Right cardiac atrium (tissue), 5 donors: ENCODE measurements at regions of chr12 and their contacts with region 1.

Region 1: GRCh38 chr12:116703214-116703795 is 34.6 kb downstream of the SPRING1 start:
- DNase-seq: peak; percentile 58 to 84 (median 83)
- ATAC-seq: peak; percentile 72 to 82
- H3K4me3 ChIP-seq: no peak overlapping the region
- H3K27ac ChIP-seq: no peak overlapping the region
- H3K4me1 ChIP-seq: no peaks in the 10 kb centered on the region
- H3K27me3 ChIP-seq: no peaks in the 10 kb centered on the region

Region 2: DNA sequence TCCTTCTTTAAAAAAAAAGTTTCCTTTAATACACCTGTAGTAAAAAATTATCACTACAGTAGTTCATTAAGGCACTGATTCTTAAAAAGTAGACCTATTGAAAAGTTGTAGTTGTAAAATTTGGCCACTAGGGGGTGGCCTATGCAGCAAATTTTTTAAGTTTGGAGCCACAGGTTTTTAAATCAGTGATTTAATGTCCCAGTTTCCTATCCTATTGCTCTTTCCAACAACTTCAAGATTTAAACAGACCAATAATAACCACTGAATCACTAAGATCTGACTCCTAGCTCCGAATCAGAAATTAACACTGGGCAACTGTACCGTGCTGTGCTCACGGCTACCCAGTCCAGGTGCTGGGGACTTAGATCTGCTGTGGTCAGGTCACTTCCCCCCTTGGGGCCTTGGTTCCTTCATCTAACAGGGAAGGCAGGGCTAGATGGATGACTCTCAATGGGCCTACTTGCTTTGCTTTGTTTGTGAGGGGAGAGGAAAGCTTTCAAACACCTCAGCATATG is 705.1 kb before region 1 on chr12:
- intact Hi-C with region 1: loop called in 2 of 4 experiments (anchors 10 kb)
- DNase-seq: no peak
- ATAC-seq: peak; percentile 26 to 58
- H3K4me3 ChIP-seq: no peak overlapping the region
- H3K27ac ChIP-seq: no peak overlapping the region
- H3K4me1 ChIP-seq: no peaks in the 10 kb centered on the region
- H3K27me3 ChIP-seq: no peaks in the 10 kb centered on the region

Region 3: DNA sequence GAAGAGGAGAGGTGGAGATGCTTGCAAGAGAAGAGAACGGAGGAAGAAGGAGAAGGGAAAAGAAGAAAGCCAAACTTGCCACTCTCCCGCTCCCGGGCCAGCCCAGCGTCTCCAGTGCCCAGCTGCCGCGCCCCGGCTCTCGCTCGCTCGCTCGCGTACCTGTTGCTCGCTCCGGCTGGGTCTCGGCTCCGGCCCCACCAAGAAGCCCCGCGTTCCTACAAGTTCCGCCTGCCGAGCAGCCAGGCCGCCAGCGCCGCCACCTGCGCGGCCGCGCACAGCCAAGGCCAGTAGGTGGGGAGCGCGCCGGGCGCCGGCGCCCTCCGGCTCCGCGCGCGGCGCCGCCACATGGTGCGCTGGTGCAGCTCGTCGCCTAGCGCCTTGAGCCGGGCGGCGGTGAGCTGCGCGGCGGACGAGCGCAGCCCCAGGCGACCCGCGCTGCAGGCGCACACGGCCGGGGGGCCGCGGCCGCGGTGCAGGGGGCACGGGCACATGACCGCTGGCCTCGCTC is 177.6 kb after region 1 on chr12:
- intact Hi-C with region 1: loop called in 3 of 4 experiments (anchors 5 to 10 kb)
- DNase-seq: peak in 2 of 3 donors; percentile 52 to 63
- ATAC-seq: peak; percentile 61 to 71
- H3K4me3 ChIP-seq: peak overlapping the region; percentile 8
- H3K27ac ChIP-seq: no peak overlapping the region
- H3K4me1 ChIP-seq: peaks cover 2% of the 10 kb centered on the region
- H3K27me3 ChIP-seq: no peaks in the 10 kb centered on the region

Region 4: GRCh38 chr12:117119592-117120198 is 416.4 kb after region 1 on chr12:
- intact Hi-C with region 1: loop called in 1 of 4 experiments (anchors 10 kb)
- DNase-seq: no peak
- ATAC-seq: peak; percentile 45 to 55
- H3K4me3 ChIP-seq: no peak overlapping the region
- H3K27ac ChIP-seq: peak overlapping the region; percentile 25
- H3K4me1 ChIP-seq: peaks cover 9% of the 10 kb centered on the region
- H3K27me3 ChIP-seq: no peaks in the 10 kb centered on the region